Right ventricle myocardium inferior (tissue), 1 donor: ENCODE measurements at regions of chr3 and their contacts with region 1.

Region 1: GRCh38 chr3:8501371-8502131 is at the start of gene LMCD1:
- DNase-seq: peak; percentile 96
- ATAC-seq: peak; percentile 99
- total RNA-seq, gene LMCD1: 48.1 TPM

Region 2: DNA sequence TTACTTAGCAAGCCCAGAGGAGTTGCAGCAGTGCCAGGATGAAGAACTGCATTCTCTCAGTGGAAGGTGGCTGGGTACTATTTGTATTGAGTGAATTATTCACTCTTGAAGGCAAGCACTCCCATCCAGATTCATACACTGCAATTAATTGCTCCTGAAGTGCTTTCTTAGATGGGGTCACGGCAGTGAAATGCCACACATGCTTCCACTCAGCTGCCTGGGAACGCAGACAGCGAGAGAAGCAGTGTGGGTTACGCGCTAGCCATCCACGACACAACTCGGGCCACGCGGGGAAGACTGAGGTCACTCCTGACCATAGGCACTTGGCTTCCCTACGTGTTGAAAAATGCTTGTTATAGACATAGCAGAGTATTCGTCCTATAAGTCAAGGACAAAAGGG is 30.8 kb before region 1 on chr3:
- intact Hi-C with region 1: no loop called
- DNase-seq: no peak
- ATAC-seq: peak; percentile 32

Region 3: GRCh38 chr3:8519774-8520448 is 18.4 kb after region 1 on chr3:
- intact Hi-C with region 1: loop called (anchors 1 kb)
- DNase-seq: no peak
- ATAC-seq: no peak

Region 4: GRCh38 chr3:8550611-8551010 is 49.1 kb after region 1 on chr3:
- intact Hi-C with region 1: loop called (anchors 5 kb)
- DNase-seq: no peak
- ATAC-seq: peak; percentile 68

Region 5: DNA sequence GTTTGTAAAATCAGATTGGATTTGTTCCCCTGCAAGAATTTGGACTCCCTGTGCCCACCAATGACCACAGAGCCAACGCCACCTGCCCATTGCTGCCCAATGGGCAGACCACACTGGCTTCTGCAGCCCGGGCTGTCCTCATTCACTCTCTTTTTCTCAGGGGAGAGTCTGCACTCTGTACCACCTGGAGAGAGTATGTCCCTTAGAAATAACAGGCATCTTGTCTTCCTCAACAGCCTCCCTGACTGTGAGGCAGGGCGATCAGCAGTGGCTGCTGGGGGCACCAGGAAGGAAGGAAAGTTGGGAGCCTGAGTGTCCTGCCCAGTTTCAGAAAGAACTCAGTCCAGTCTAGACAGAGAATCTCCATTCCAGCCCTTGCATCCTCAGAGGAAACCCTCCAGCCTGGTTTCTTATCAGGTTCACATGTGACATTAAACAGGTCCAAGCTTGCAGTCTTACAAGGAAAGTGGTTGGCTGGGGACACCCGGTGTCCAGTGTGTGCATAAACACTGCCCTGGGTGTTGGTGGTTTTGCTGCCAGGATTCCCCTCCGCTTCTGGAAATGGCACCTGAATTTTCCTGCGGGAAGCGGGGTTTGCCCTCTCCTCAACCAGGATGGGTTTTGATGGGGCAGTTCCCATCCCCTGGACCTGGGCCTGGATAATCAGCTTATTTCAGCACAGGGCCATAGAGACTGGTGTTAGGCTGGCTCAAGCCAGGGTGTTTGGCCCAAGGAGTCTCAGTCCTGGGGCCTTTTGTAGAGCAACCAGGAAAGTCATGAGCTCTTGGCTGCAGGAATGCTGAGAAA is 105.9 kb after region 1 on chr3:
- intact Hi-C with region 1: loop called (anchors 5 kb)
- DNase-seq: no peak
- ATAC-seq: peak; percentile 96